ENCODE measurements at regions of chr5 and their contacts with region 1.

Region 1: DNA sequence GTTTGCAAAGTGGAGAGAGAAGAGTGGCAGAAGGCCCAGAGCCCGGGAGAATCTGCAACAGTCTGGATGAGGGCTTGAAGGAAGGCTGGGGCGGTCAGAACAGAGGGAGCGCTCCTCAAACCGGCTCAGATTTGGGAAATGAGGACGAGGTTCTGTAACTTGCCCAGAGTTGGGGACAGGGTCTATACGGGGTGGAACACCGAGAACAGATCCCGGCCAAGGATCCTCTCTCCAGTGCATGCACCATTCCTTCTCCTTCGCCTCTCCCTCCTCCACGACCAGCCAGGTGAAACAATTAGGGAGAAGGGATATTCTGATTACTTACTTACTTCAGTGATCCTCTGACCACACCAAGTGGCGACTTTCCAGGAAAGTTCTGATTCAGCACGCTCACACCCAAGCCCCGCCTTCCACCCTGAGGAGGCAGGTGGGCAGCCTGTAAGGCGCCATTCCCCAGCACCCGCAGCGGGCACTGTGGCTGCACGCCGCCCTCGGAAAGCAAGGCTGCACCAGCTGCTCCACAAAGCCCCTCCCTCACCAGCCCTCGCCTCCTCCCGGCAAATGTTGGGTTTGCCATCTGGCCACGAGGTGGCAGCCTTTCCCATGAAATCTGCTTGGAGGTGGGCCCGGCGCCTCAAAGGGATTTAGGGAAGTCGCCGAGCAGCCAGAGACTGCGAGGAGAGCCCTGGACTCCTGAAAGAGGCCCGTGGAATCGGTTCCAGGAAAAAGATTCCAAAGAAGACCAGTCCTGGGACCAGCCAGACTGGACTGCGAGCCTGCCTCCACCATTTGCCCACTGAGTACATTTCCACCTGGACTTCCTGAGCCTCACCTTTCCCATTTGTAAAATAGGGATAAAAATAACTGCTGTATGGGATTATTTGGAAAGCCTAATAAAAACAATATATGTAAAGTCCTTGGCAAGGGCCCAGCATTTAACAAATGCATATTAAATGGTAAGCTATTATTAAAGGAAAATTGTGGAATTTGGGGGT is 22.2 kb upstream of the WWC1 start:
- H3K4me3 Mint-ChIP-seq: peak overlapping the region; percentile 54
- H3K27ac Mint-ChIP-seq: no peak overlapping the region
- H3K4me1 Mint-ChIP-seq: peaks cover 11% of the 10 kb centered on the region
- H3K27me3 Mint-ChIP-seq: peaks cover 12% of the 10 kb centered on the region

Region 2: GRCh38 chr5:168209244-168209995 is 59.8 kb before region 1 on chr5:
- intact Hi-C with region 1: no loop called
- H3K4me3 Mint-ChIP-seq: no peak overlapping the region
- H3K27ac Mint-ChIP-seq: no peak overlapping the region
- H3K4me1 Mint-ChIP-seq: no peaks in the 10 kb centered on the region
- H3K27me3 Mint-ChIP-seq: no peaks in the 10 kb centered on the region

Region 3: GRCh38 chr5:168486136-168486879 is 217.1 kb after region 1 on chr5 and contains the start of gene RARS1:
- intact Hi-C with region 1: loop called (anchors 1 kb)
- H3K4me3 Mint-ChIP-seq: peak within 1 kb of the TSS; percentile 95
- H3K27ac Mint-ChIP-seq: peak within 1 kb of the TSS; percentile 86
- H3K4me1 Mint-ChIP-seq: peaks cover 15% of the 10 kb centered on the region
- H3K27me3 Mint-ChIP-seq: peaks cover 13% of the 10 kb centered on the region

Region 4: GRCh38 chr5:168679515-168679920 is 410.3 kb after region 1 on chr5:
- intact Hi-C with region 1: loop called (anchors 5 kb)
- H3K4me3 Mint-ChIP-seq: no peak overlapping the region
- H3K27ac Mint-ChIP-seq: no peak overlapping the region
- H3K4me1 Mint-ChIP-seq: peaks cover 6% of the 10 kb centered on the region
- H3K27me3 Mint-ChIP-seq: no peaks in the 10 kb centered on the region

Measured in dendritic cell treated with granulocyte-macrophage colony-stimulating factor and Interleukin-4, amounts not matched to agents 40 ng/mL and 50 ng/mL, for 4 days (primary cell).